HepG2 (cell line): ENCODE measurements at regions of chr3 and their contacts with region 1.

Region 1: DNA sequence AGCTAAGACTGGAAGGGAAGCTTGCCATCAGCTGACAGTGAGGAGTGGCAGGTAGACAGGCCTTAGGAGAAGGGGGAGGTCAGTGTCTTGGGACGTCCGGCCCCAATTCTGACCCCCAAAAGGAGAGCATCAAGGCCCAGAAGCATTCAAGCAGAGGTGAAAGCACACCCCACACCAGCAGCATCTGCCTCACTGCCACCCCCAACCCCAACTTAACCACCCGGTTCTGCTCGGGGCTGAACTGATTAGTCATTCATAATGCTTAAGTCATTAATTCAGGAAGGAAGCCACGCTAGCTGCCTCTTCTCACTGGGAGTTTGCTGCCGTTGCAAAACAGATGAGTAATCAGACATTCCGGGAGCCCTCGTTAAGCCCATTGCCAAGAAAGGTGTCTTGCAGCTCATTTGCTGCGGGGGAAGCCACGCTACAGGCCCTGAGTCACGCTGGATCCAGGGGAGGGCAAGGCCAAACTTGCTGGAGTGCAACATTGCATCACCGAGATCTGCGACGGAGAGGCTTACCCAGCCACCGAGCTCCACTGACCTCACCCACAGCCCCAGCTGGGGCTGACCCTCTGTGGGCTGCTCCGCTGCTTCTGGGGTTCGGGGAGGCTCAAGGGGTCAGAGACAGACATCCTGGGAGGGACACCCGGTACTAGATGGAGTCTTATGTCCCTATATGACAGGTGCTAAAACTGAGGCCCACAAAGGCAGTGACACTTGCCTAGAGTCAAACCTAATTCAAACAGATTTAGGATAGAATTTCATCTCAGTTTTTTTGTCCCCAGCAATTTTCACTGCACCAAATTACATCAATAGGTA is 46.4 kb upstream of the HES1 start:
- DNase-seq: peak; percentile 71
- ATAC-seq: peak; percentile 89
- H3K4me3 ChIP-seq: peak overlapping the region in 1 of 3 experiments; percentile 36; a peak in 1 of 6 replicates
- H3K27ac ChIP-seq: no peak overlapping the region
- H3K4me1 ChIP-seq: peaks cover 52% of the 10 kb centered on the region
- H3K27me3 ChIP-seq: no peaks in the 10 kb centered on the region; a peak in 1 of 5 replicates
- CTCF ChIP-seq: no peak
- EP300 ChIP-seq: peak in 1 of 2 experiments; percentile 4; a peak in 1 of 4 replicates
- POLR2A ChIP-seq: no peak
- RAD21 ChIP-seq: no peak

Region 2: DNA sequence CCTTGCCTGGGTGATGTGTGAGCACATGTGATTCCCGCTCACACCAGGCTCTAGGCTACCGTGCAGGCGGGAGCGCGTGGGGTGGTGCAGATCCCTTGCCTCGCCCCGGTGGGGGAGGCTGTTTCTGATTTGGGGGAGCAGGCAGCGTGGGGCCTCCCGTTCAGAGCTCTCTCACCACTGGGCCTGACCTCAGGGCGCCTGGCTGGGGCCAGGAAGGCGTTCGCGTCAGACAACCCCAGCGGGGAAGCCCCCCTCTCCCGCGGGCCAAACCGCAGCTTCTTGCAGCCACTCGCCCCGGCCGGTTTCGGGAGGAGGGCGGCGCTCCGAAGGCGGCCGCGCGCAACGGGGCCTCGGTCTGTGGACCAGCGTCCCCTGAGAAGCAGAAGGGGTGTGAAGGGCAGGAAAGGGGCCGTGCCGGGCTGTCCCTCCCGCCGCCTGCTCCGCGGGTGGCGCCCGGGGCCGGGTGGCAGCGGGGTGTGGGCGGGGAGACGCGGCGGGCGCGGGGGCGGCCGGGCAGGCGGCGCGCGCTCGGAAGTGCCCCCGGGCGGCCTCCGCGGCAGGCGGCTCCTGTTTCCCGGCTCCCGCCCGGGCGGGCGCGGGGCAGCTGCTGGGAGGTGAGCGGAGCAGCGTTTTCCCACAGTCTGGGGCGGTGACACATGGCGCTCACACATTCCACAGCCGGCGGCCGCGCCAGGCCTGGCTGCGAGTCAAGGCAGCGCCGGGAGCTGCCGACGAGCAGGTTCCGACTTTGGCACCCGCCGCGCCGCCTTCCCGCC is 18.7 kb before region 1 on chr3:
- CTCF ChIA-PET with region 1: no interaction called
- POLR2A ChIA-PET with region 1: interaction called, 11 read pairs
- in situ Hi-C with region 1: no loop called
- intact Hi-C with region 1: no loop called
- DNase-seq: peak; percentile 47
- ATAC-seq: peak; percentile 67
- H3K4me3 ChIP-seq: peak overlapping the region; percentile 41 to 68 (median 47); a peak in 5 of 6 replicates
- H3K27ac ChIP-seq: peak overlapping the region; percentile 68
- H3K4me1 ChIP-seq: peaks cover 53% of the 10 kb centered on the region
- H3K27me3 ChIP-seq: no peaks in the 10 kb centered on the region; a peak in 1 of 5 replicates
- CTCF ChIP-seq: no peak
- EP300 ChIP-seq: no peak; a peak in 2 of 4 replicates
- POLR2A ChIP-seq: peak in 1 of 2 experiments; percentile 33; a peak in 1 of 4 replicates
- RAD21 ChIP-seq: no peak; the same call in 1 of the 2 replicates

Region 3: DNA sequence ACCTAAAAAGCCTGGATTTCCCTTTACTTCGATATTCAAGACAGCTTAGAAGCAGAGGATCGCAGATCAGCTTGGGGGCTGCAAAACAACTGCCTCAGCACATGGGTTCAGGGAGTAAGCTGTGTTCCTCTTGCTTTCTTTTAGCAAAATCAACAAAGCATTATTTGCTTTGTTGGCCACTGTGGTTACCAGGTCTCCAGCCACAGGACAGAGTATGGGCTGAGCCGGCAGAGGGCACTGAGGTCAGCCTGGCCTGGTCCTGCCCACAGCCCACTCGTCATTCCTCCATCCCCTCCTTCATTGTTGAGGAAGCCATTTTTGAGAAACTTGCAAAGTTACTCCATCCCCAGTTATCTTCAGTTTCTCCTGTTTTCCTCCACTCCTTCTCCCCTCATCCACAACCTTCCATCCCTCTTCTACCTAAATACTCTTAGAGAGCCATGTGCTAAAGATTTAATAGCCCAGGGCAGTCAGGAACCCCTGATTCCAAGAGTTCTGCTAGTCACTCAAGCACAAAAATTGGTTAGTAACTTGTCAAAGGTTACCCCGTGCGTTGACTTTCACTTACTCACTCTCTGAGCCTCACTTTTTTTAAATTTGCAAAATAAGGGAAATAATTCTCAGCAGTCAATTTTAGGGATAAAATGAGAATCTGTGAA is 13.6 kb before region 1 on chr3:
- CTCF ChIA-PET with region 1: no interaction called
- POLR2A ChIA-PET with region 1: interaction called, 11 read pairs
- in situ Hi-C with region 1: no loop called
- intact Hi-C with region 1: no loop called
- DNase-seq: peak; percentile 86
- ATAC-seq: peak; percentile 94
- H3K4me3 ChIP-seq: peak overlapping the region in 2 of 3 experiments; percentile 4 to 19; a peak in 2 of 6 replicates
- H3K27ac ChIP-seq: peak overlapping the region; percentile 45
- H3K4me1 ChIP-seq: peaks cover 66% of the 10 kb centered on the region
- H3K27me3 ChIP-seq: no peaks in the 10 kb centered on the region; a peak in 2 of 5 replicates
- CTCF ChIP-seq: peak; percentile 80
- EP300 ChIP-seq: peak in 1 of 2 experiments; percentile 78; a peak in 2 of 4 replicates
- POLR2A ChIP-seq: no peak
- RAD21 ChIP-seq: peak; percentile 61; the same call in 1 of the 2 replicates

Region 4: GRCh38 chr3:194112120-194113106 is 22.8 kb after region 1 on chr3:
- CTCF ChIA-PET with region 1: no interaction called
- POLR2A ChIA-PET with region 1: interaction called, 17 read pairs
- in situ Hi-C with region 1: no loop called
- intact Hi-C with region 1: no loop called
- DNase-seq: peak; percentile 98
- ATAC-seq: peak; percentile 96
- H3K4me3 ChIP-seq: peak overlapping the region in 1 of 3 experiments; percentile 13; a peak in 2 of 6 replicates
- H3K27ac ChIP-seq: peak overlapping the region; percentile 58
- H3K4me1 ChIP-seq: peaks cover 69% of the 10 kb centered on the region
- H3K27me3 ChIP-seq: no peaks in the 10 kb centered on the region
- CTCF ChIP-seq: no peak
- EP300 ChIP-seq: peak in 1 of 2 experiments; percentile 61; a peak in 2 of 4 replicates
- POLR2A ChIP-seq: no peak
- RAD21 ChIP-seq: no peak